ENCODE measurements at regions of chr4 and their contacts with region 1.

Region 1: GRCh38 chr4:74397748-74398426 is 32.9 kb downstream of the EREG start:
- DNase-seq: peak; percentile 69
- ATAC-seq: peak; percentile 56
- H3K4me3 ChIP-seq: peak overlapping the region; percentile 48 to 84 (median 65)
- H3K4me3 Mint-ChIP-seq: peak overlapping the region; percentile 96
- H3K27ac ChIP-seq: peak overlapping the region; percentile 76 to 81
- H3K27ac Mint-ChIP-seq: peak overlapping the region; percentile 95
- H3K4me1 ChIP-seq: peaks cover 4 to 6% of the 10 kb centered on the region in 2 donors
- H3K4me1 Mint-ChIP-seq: peaks cover 16% of the 10 kb centered on the region
- H3K27me3 ChIP-seq: no peaks in the 10 kb centered on the region
- H3K27me3 Mint-ChIP-seq: no peaks in the 10 kb centered on the region
- CTCF ChIP-seq: no peak

Region 2: GRCh38 chr4:74320559-74321118 is 77.2 kb before region 1 on chr4:
- CTCF ChIA-PET with region 1: no interaction called
- POLR2A ChIA-PET with region 1: no interaction called
- intact Hi-C with region 1: no loop called
- DNase-seq: peak; percentile 31
- ATAC-seq: peak; percentile 24
- H3K4me3 ChIP-seq: no peak overlapping the region
- H3K4me3 Mint-ChIP-seq: no peak overlapping the region
- H3K27ac ChIP-seq: no peak overlapping the region
- H3K27ac Mint-ChIP-seq: no peak overlapping the region
- H3K4me1 ChIP-seq: no peaks in the 10 kb centered on the region
- H3K4me1 Mint-ChIP-seq: no peaks in the 10 kb centered on the region
- H3K27me3 ChIP-seq: peaks cover 0 to 10% (median 4%) of the 10 kb centered on the region in 4 experiments
- H3K27me3 Mint-ChIP-seq: peaks cover 26% of the 10 kb centered on the region
- CTCF ChIP-seq: peak; percentile 31

Region 3: GRCh38 chr4:74444891-74445642 is 47.2 kb after region 1 on chr4 and contains the start of gene AREG:
- CTCF ChIA-PET with region 1: interaction called, 5 read pairs
- POLR2A ChIA-PET with region 1: interaction called, 7 read pairs
- intact Hi-C with region 1: loop called (anchors 1 kb)
- DNase-seq: peak; percentile 98
- ATAC-seq: peak; percentile 93
- H3K4me3 ChIP-seq: peak within 1 kb of the TSS; percentile 67 to 89 (median 84)
- H3K4me3 Mint-ChIP-seq: peak within 1 kb of the TSS; percentile 89
- H3K27ac ChIP-seq: peak within 1 kb of the TSS; percentile 94 to 97
- H3K27ac Mint-ChIP-seq: peak within 1 kb of the TSS; percentile 95
- H3K4me1 ChIP-seq: peaks cover 8 to 9% of the 10 kb centered on the region in 2 donors
- H3K4me1 Mint-ChIP-seq: peaks cover 12% of the 10 kb centered on the region
- H3K27me3 ChIP-seq: no peaks in the 10 kb centered on the region
- H3K27me3 Mint-ChIP-seq: peaks cover 4% of the 10 kb centered on the region
- CTCF ChIP-seq: peak; percentile 71
- total RNA-seq, gene AREG: 4.6 and 4.9 TPM in 2 replicates

Measured in B cell (primary cell).